Lower leg skin (tissue), 4 donors: ENCODE measurements at regions of chr1 and their contacts with region 1.

Region 1: DNA sequence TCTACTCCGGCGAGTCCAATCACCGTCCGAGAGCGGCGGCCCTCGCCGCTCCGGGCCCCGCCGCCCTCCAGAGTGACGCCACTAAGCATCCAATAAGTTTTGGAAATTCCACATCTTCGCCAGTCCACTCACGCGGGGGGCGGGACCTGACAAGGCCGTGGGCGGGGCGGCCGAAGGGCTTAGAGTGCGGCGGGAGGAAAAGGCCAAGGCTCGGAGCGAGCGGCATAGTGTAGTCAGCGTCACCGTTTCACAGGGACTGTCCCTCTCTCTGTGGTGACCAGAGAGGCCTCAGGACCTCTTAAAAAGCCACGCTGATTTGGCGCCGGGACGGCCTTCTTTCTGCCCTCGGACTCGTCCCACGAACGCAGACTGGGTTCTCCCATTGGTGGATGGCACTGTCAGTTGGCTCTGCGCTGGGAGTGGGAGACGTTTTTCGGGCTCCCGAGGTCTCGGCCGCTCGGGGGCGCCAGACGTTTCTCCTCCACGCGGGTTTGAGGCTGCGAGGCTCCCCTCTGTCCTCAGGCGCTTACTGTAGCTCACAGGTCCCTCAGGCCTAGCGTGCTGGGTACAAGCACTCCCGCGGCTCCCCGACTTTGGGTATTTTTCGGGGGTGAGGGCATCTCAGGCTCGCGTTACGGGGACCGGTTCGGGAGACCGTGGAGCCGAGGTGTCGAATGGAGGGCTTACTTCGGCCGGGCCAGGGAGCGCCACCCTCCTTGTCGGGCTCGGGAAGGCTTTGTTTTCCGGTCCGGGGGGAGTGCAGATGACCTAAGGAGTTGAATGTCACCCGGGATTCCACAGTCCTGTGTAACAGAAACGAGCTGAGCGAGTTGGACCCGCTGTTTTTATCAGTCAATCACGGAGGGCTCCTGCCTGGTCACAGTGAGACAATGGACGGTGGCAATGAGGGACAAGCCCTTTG is 488 bp upstream of the TRIM45 start:
- DNase-seq: peak; percentile 94 to 99
- H3K4me3 ChIP-seq: peak overlapping the region; percentile 56
- CTCF ChIP-seq: peak in 1 of 3 donors; percentile 71
- POLR2A ChIP-seq: no peak

Region 2: DNA sequence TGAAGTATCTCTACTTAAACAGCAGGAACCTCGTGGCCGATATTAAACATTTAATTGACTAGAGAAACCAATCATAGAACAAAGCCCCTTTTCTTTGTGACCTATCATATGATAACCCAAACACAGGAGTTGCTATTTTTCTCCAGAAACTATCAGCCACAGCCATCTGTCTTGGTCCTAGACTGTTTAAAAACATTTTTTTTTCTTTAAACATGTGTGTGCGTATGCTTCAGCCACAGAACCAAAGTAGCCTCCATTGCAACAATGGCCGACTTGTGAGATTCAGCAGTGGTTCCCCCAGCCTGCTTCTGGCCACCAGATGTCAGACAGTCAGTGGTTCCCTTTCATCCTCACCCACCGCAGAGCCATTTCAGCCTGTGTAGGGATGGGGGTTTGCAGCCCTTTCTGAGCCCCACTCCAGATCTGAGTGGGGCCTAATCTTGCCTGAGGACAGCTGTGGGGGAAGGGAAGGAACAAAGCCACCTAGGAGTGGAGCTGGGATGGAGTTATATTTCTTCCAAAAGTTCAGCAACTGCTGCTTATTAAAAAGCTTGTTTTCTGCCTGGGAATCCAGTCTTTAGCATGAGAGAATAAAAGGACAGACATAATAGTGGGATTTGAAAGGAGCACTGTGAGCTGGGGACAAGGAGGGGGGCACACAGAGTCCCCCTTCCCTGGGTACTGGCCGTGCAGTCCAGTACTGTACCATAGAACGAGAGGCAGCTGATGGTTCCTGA is 442.8 kb before region 1 on chr1:
- intact Hi-C with region 1: no loop called
- DNase-seq: no peak
- H3K4me3 ChIP-seq: no peak overlapping the region
- CTCF ChIP-seq: no peak
- POLR2A ChIP-seq: no peak

Region 3: DNA sequence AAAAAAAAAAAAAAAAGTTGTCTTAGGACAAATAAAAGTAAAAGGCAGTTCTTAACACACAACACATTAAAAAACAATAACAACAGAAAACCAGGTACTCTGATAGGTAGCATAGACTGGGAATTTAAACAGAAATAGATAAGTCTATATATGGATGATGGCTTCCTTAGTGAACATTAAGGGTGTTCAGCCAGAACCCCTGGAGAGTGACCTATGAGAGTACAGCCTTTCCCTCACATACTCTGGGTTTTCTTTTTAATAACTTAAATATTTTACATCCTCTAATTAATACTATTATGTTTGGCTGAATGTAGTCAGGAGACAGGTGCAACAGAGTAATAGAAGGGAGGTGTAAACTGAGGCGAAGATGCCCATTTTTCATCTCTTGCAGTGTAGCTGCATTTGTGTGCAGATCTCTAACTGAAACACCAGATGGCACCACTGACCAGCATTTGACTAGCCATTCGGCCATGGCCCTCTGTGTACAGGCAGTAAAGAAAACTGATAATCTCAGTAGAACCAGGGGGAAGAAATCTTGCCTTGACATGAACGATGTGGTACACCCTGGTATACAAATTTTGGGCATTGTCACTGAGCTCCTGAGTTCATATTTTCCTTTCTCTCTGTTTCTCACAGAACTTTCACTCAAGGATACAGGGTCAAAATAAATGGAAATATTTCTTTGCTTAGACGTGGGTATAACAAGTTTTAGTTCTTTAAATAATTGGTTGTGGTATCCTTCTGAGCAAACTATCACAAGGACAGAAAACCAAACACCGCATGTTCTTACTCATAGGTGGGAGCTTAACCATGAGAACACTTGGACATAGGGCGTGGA is 54.3 kb before region 1 on chr1:
- intact Hi-C with region 1: loop called (anchors 5 kb)
- DNase-seq: no peak
- H3K4me3 ChIP-seq: no peak overlapping the region
- CTCF ChIP-seq: peak in 1 of 3 donors; percentile 13
- POLR2A ChIP-seq: no peak

Region 4: DNA sequence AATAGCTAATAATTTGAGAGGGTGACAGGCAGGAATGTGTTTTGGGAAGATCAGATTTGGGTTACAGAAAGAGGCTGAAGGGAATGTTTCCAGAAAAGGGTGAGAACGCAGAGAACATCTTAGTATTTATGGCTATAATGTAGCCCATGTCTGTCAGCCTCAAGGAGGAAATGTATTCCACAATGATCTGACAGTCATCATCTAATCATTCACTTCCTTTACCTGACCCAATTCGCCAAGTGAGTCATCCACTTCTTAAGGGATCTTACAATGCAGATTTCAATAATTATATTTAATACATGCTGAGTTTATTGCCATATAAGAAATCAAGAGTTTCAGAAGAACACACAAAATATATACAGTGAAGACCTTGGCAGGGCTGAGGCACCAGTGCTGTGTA is 11.3 kb before region 1 on chr1:
- intact Hi-C with region 1: no loop called
- DNase-seq: no peak
- H3K4me3 ChIP-seq: no peak overlapping the region
- CTCF ChIP-seq: no peak
- POLR2A ChIP-seq: no peak

Region 5: GRCh38 chr1:117205368-117205767 is 83.3 kb after region 1 on chr1:
- intact Hi-C with region 1: no loop called
- DNase-seq: no peak
- H3K4me3 ChIP-seq: no peak overlapping the region
- CTCF ChIP-seq: no peak
- POLR2A ChIP-seq: no peak

Region 6: GRCh38 chr1:117416546-117417125 is 294.6 kb after region 1 on chr1:
- intact Hi-C with region 1: no loop called
- DNase-seq: no peak
- H3K4me3 ChIP-seq: no peak overlapping the region
- CTCF ChIP-seq: no peak
- POLR2A ChIP-seq: no peak